ENCODE measurements at regions of chr7 and their contacts with region 1.

Region 1: GRCh38 chr7:100673300-100673941 is at the start of gene GNB2:
- DNase-seq: peak; percentile 99 to 100
- H3K4me3 ChIP-seq: peak within 1 kb of the TSS; percentile 86
- CTCF ChIP-seq: peak in 1 of 3 donors; percentile 32
- POLR2A ChIP-seq: no peak
- total RNA-seq, gene GNB2: 309 to 439 (median 353) TPM

Region 2: GRCh38 chr7:100545360-100546128 is 127.9 kb before region 1 on chr7:
- intact Hi-C with region 1: loop called (anchors 5 kb)
- DNase-seq: no peak
- H3K4me3 ChIP-seq: no peak overlapping the region
- CTCF ChIP-seq: no peak
- POLR2A ChIP-seq: no peak

Measured in lower leg skin (tissue), 4 donors.